Left lung (tissue), 14 donors: ENCODE measurements at regions of chr11 and their contacts with region 1.

Region 1: GRCh38 chr11:129117595-129118350 is 74.4 kb downstream of the ARHGAP32 start:
- DNase-seq: peak in 2 of 4 donors; percentile 53 to 74
- ATAC-seq: peak; percentile 87
- H3K4me3 ChIP-seq: no peak overlapping the region
- H3K27ac ChIP-seq: no peak overlapping the region
- H3K4me1 ChIP-seq: no peaks in the 10 kb centered on the region
- H3K27me3 ChIP-seq: no peaks in the 10 kb centered on the region
- CTCF ChIP-seq: peak; percentile 62 to 91

Region 2: DNA sequence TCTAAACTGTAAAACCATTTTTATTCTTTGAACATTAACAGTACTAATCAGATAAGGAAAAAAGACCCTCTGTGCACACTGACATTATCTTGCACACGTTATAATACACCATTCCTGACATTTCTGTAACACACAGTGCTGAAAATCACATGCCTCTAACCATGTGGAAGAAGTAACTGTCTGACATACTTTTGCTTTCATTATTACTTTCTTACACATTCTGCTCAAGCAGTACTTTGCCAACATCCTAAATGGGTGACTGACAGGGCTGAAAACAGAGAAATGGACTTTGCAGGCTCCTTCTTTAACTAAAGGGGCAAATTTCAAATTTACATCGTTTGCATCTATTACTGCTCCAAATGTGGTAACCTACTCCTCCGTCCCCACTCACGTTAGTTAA is 152.3 kb before region 1 on chr11:
- intact Hi-C with region 1: no loop called
- DNase-seq: no peak
- ATAC-seq: peak; percentile 39
- H3K4me3 ChIP-seq: no peak overlapping the region
- H3K27ac ChIP-seq: no peak overlapping the region
- H3K4me1 ChIP-seq: peaks cover 0 to 8% of the 10 kb centered on the region in 2 donors
- H3K27me3 ChIP-seq: no peaks in the 10 kb centered on the region
- CTCF ChIP-seq: no peak

Region 3: DNA sequence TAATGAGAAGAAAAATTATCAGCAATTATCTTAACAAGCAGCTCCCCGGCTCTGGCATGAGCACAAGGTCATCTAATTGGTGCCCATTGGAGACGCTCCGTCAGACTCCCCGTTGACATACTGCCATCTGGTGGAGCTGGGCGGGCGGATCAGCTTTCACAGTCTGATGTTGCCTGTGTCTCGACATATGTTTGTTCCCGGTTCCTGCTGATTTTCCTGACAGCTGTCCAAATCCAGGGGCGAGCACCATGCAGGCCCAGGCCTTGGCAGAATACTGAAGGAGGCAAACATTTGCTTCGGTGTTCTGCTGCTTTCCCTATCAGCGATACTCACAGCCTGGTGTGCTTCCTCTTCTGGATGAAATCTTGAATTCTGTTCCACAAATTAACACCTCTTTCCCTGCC is 214.1 kb after region 1 on chr11:
- intact Hi-C with region 1: loop called in 1 of 2 experiments (anchors 5 kb)
- DNase-seq: peak; percentile 70 to 90 (median 81)
- ATAC-seq: peak; percentile 100
- H3K4me3 ChIP-seq: no peak overlapping the region
- H3K27ac ChIP-seq: no peak overlapping the region
- H3K4me1 ChIP-seq: no peaks in the 10 kb centered on the region
- H3K27me3 ChIP-seq: no peaks in the 10 kb centered on the region
- CTCF ChIP-seq: peak; percentile 70 to 76

Region 4: DNA sequence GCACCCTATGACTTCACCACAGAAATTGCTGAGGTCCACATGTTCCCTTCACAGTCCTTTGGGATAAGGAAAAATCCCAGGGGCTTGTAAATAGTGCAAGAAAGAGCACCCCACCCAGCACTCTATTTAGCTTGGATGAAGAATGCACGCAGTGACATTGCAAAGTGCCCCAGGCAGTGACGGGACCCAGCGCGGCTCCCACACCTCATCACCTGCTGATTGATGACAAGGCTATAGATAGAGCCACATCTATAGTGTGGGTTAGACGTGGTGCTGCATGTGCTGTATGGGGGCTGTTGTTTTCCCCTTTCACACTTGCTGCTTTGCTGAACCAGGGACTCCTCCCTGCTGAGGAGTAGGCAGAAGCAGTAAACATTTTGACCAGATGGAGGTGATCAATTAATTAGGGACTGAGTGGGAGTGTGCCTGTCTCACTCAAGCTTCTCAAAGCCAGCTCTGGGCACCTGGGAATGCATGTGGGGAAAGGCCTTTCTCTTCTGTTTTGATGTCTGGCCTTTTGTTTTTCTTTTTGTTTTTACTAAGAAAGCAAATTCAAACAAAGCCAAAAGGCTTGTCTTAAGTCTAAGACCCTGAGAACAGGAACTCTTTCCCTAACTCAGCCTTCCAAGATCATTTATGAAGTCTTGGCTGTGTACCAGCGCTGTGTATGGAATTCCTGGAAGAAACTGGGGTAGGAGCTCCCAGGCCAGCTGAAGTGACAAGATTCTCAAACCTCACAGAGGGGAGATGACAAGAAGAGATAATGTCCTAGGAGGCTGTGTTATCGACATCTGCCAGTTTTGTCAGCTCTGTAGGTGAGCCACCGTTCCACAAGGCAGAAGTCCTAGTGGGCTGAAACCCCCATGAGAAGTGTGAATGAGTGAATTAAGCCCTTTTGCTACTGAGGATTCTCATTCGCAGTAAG is 477.5 kb after region 1 on chr11:
- intact Hi-C with region 1: no loop called
- DNase-seq: no peak
- ATAC-seq: no peak
- H3K4me3 ChIP-seq: no peak overlapping the region
- H3K27ac ChIP-seq: no peak overlapping the region
- H3K4me1 ChIP-seq: no peaks in the 10 kb centered on the region
- H3K27me3 ChIP-seq: no peaks in the 10 kb centered on the region
- CTCF ChIP-seq: no peak